Activated CD4-positive, alpha-beta memory T cell treated with anti-CD3 and anti-CD28 coated beads for 36 hours (primary cell): ENCODE measurements at regions of chr14 and their contacts with region 1.

Region 1: DNA sequence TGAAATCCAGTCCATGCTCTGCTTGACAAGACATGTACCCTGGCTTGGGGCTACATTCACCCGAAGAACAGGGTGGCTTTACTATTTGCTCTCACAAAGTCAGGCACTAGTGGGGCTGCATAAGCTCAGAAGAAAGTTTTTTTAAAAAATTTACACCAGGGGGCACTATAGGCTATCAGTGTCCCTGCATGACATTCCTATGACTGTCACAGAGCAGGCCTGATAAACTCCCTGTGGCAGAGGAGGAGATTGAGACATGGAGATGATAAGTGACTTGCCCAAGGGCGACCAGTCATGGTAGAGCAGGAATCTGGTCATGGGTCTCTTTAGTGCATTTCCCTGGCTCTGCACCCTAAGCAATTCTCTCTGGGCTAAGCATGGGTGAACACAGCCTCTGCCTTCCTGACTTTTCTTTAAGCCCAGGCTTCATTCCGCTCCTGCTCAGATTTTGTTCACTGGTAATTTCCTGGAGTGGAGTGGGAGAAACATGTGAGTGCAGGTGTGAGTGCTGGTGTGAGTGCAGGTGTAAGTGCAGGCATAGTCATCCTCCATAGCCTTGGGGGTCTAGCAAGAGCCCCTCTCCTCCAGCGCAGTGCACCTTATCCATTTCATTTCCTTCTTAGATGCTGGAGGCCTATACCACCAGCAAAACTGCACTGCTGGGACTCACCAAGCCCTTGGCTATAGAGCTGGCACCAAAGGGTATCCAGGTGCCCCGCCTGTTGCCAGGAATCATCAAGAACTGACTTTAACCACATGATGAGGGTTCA is 91.6 kb downstream of the DHRS2 start:
- DNase-seq: no peak
- H3K4me3 Mint-ChIP-seq: no peak overlapping the region
- H3K27ac Mint-ChIP-seq: no peak overlapping the region
- H3K4me1 Mint-ChIP-seq: no peaks in the 10 kb centered on the region
- H3K27me3 Mint-ChIP-seq: peaks cover 7% of the 10 kb centered on the region

Region 2: GRCh38 chr14:23675906-23676305 is 51.8 kb before region 1 on chr14:
- CTCF ChIA-PET with region 1: no interaction called
- POLR2A ChIA-PET with region 1: no interaction called
- intact Hi-C with region 1: no loop called
- DNase-seq: no peak
- H3K4me3 Mint-ChIP-seq: no peak overlapping the region
- H3K27ac Mint-ChIP-seq: no peak overlapping the region
- H3K4me1 Mint-ChIP-seq: no peaks in the 10 kb centered on the region
- H3K27me3 Mint-ChIP-seq: peaks cover 12% of the 10 kb centered on the region

Region 3: DNA sequence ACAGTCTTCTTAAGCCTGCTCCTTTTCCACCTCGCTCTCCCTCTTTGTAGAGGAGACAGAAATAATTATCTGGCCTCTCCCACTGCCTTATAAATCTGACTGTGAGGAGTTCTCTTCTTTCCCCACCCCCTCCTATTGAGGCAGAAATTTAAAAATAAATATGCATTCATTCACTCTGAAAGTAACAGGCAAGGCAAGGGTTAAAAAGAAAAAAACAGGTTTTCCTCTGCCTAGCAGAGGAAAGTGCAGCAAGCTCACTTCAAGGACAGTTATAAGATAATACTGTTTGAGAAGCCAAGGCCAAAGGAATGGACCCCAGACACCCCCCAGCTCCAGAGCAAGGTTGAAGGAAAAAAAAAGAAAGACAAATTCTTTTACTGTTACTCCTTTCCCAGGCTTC is 35.3 kb before region 1 on chr14:
- CTCF ChIA-PET with region 1: no interaction called
- POLR2A ChIA-PET with region 1: no interaction called
- intact Hi-C with region 1: no loop called
- DNase-seq: no peak
- H3K4me3 Mint-ChIP-seq: no peak overlapping the region
- H3K27ac Mint-ChIP-seq: no peak overlapping the region
- H3K4me1 Mint-ChIP-seq: no peaks in the 10 kb centered on the region
- H3K27me3 Mint-ChIP-seq: peaks cover 23% of the 10 kb centered on the region

Region 4: DNA sequence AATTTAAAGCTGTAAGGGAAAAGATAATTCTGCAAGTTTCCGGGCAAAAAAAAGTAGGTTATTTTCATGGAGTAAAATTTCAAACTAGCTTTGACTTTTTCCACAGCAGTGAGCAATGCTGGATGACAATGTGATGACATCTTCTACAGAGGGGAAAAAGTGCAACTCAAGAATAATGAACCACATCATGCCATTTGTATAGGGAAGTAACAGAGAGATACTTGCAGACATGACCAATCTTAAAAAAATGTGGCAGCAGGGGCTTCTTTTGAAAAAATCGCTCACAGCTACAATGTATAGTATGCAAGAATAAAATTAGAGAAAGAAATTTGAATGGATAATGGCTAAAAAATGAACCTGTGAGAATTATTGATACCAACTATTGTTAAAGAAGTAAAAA is 23.9 kb after region 1 on chr14:
- CTCF ChIA-PET with region 1: no interaction called
- POLR2A ChIA-PET with region 1: no interaction called
- intact Hi-C with region 1: no loop called
- DNase-seq: no peak
- H3K4me3 Mint-ChIP-seq: no peak overlapping the region
- H3K27ac Mint-ChIP-seq: no peak overlapping the region
- H3K4me1 Mint-ChIP-seq: no peaks in the 10 kb centered on the region
- H3K27me3 Mint-ChIP-seq: peaks cover 3% of the 10 kb centered on the region

Region 5: DNA sequence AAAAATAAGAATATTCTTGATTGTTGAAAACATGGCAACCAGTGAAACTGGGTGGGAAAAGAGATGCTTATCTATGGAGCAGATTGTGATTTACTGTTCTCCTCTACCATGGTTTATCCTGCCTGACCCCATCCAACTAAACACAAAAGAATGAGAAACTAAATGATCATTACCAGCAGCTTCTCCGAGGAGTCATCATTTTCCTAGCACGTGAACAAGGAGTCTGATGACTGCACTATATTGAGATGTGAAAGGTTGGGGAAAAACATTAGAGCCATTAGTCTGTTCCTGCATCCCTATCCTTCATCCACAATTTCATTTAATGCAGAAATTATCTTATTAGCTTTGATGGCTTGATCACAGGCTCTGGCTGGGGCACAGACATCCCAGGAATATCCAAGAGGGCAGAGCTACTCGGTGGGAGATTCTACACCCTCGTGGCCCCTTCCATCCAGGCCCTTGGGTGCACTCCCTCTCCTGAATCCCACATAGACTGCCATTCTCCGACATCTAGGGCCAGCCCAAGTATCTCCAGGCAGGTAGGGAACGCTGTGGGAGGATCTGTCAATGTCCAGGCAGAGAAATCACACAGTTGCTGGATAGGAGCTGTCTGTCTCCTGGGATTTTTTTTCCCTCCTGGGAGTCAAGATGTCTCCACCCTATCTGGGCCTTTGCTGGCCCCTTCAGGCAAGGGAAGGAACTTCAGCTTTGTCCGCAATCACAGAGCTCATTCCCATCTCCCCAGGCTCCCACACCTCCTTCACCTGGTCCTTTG is 182.5 kb after region 1 on chr14:
- CTCF ChIA-PET with region 1: interaction called, 15 read pairs
- POLR2A ChIA-PET with region 1: no interaction called
- intact Hi-C with region 1: no loop called
- DNase-seq: peak; percentile 42
- H3K4me3 Mint-ChIP-seq: no peak overlapping the region
- H3K27ac Mint-ChIP-seq: no peak overlapping the region
- H3K4me1 Mint-ChIP-seq: no peaks in the 10 kb centered on the region
- H3K27me3 Mint-ChIP-seq: peaks cover 14% of the 10 kb centered on the region

Region 6: GRCh38 chr14:23929822-23930294 is 202.1 kb after region 1 on chr14:
- CTCF ChIA-PET with region 1: interaction called, 14 read pairs
- POLR2A ChIA-PET with region 1: no interaction called
- intact Hi-C with region 1: loop called (anchors 1 kb)
- DNase-seq: peak; percentile 88
- H3K4me3 Mint-ChIP-seq: no peak overlapping the region
- H3K27ac Mint-ChIP-seq: no peak overlapping the region
- H3K4me1 Mint-ChIP-seq: no peaks in the 10 kb centered on the region
- H3K27me3 Mint-ChIP-seq: peaks cover 3% of the 10 kb centered on the region

Region 7: DNA sequence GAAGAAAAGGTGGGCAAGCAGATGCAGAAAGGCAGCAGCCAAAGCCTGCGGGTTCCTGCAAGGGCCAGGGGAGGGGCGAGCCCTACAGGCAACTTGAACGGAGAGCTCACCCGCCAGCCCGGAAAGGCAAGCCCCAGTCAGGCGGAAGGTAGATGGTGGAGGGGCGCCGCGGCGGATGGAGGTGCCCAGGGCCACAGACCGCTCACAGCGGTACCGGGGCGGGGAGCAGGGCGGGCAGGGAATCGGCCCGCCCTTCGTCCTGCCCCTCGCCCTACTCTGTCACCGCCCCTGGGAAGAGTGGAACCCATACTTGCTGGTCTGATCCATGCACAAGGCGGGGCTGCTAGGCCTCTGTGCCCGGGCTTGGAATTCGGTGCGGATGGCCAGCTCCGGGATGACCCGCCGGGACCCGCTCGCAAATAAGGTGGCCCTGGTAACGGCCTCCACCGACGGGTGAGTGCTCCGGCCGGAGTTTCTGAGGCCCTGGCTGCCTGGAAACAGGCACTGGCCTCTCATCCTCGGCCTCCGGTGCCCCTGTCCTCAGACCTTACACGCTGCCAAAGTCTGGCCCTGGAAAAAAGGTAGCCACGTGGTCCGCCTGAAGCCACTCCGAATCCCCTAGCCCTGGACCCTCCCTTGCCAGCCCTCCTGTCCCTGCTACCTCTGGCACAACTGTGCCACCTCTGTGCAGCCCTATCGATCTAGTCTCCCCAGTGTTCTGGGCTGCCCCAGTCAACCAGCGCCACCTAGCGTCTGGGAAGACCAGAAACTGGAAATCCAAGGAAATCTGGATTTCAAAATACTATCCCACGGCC is 225.9 kb after region 1 on chr14 and contains the start of gene DHRS4:
- CTCF ChIA-PET with region 1: no interaction called
- POLR2A ChIA-PET with region 1: no interaction called
- intact Hi-C with region 1: loop called (anchors 1 kb)
- DNase-seq: peak; percentile 87
- H3K4me3 Mint-ChIP-seq: peak within 1 kb of the TSS; percentile 100
- H3K27ac Mint-ChIP-seq: peak within 1 kb of the TSS; percentile 88
- H3K4me1 Mint-ChIP-seq: peaks cover 28% of the 10 kb centered on the region
- H3K27me3 Mint-ChIP-seq: no peaks in the 10 kb centered on the region
- total RNA-seq, gene DHRS4: 25.7 to 27.0 TPM